Heart left ventricle (tissue), 16 donors: ENCODE measurements at regions of chr5 and their contacts with region 1.

Region 1: DNA sequence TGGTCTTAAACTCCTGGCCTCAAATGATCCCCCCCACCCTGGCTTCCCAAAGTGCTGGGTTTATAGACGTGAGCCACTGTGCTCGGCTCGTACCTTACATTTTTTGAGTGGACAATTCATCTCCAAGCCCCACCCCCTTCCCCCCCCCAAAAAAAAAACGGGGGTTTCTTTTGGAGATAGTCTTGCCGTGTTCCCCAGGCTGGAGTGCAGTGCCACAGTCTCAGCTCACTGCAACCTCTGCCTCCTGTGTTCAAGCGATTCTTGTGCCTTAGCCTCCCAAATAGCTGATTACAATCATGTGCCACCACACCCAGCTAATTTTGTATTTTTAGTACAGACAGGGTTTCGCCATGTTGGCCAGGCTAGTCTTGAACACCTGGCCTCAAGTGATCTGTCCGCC is 31.3 kb downstream of the ANKHD1 start:
- DNase-seq: no peak
- ATAC-seq: no peak
- H3K4me3 ChIP-seq: no peak overlapping the region
- H3K27ac ChIP-seq: no peak overlapping the region
- H3K4me1 ChIP-seq: peaks cover 0 to 27% (median 7%) of the 10 kb centered on the region in 12 donors
- H3K27me3 ChIP-seq: no peaks in the 10 kb centered on the region
- CTCF ChIP-seq: no peak
- POLR2A ChIP-seq: no peak

Region 2: DNA sequence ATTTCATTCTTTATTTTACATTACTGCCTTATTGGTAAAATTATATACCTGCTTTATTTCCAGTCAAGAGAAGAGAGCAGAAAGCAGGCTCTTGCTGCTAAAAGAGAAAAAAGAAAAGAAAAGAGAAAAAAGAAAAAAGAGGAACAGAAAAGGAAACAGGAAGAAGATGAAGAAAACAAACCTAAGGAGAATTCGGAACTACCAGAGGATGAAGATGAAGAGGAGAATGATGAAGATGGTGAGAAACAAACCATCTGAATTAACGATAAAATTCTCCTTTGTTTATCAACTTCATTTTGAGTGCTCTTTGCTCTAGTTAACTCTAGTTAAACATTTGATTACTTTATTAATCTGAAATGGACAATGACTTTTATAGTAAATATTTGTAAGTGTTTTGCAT is 91.1 kb after region 1 on chr5:
- intact Hi-C with region 1: loop called in 1 of 10 experiments (anchors 10 kb)
- DNase-seq: no peak
- ATAC-seq: no peak
- H3K4me3 ChIP-seq: no peak overlapping the region
- H3K27ac ChIP-seq: no peak overlapping the region
- H3K4me1 ChIP-seq: no peaks in the 10 kb centered on the region
- H3K27me3 ChIP-seq: no peaks in the 10 kb centered on the region
- CTCF ChIP-seq: no peak
- POLR2A ChIP-seq: no peak

Region 3: GRCh38 chr5:140595538-140596300 is 162.8 kb after region 1 on chr5:
- intact Hi-C with region 1: no loop called
- DNase-seq: peak in 3 of 5 donors; percentile 51 to 59 (median 57)
- ATAC-seq: peak in 3 of 4 donors; percentile 79 to 82 (median 80)
- H3K4me3 ChIP-seq: peak overlapping the region in 1 of 12 donors; percentile 12
- H3K27ac ChIP-seq: peak overlapping the region in 9 of 12 donors; percentile 16 to 81 (median 43)
- H3K4me1 ChIP-seq: peaks cover 0 to 48% (median 11%) of the 10 kb centered on the region in 12 donors
- H3K27me3 ChIP-seq: no peaks in the 10 kb centered on the region
- CTCF ChIP-seq: no peak
- POLR2A ChIP-seq: no peak